Activated CD8-positive, alpha-beta T cell treated with anti-CD3 and anti-CD28 coated beads, Interleukin-2, amount 10 ng/mL, durations not matched to agents 7 days and 5 days (primary cell): ENCODE measurements at regions of chr7 and their contacts with region 1.

Region 1: GRCh38 chr7:129359638-129360037 is 74.6 kb upstream of the STRIP2 start:
- DNase-seq: no peak
- ATAC-seq: no peak
- H3K4me3 Mint-ChIP-seq: no peak overlapping the region
- H3K27ac Mint-ChIP-seq: no peak overlapping the region
- H3K4me1 Mint-ChIP-seq: peaks cover 6% of the 10 kb centered on the region
- H3K27me3 Mint-ChIP-seq: no peaks in the 10 kb centered on the region

Region 2: GRCh38 chr7:129343099-129343700 is 16.4 kb before region 1 on chr7:
- CTCF ChIA-PET with region 1: interaction called, 10 read pairs
- POLR2A ChIA-PET with region 1: no interaction called
- DNase-seq: peak; percentile 44
- ATAC-seq: peak; percentile 52
- H3K4me3 Mint-ChIP-seq: no peak overlapping the region
- H3K27ac Mint-ChIP-seq: no peak overlapping the region
- H3K4me1 Mint-ChIP-seq: peaks cover 41% of the 10 kb centered on the region
- H3K27me3 Mint-ChIP-seq: no peaks in the 10 kb centered on the region

Region 3: GRCh38 chr7:129417071-129417470 is 57.4 kb after region 1 on chr7:
- CTCF ChIA-PET with region 1: no interaction called
- POLR2A ChIA-PET with region 1: no interaction called
- DNase-seq: no peak
- ATAC-seq: no peak
- H3K4me3 Mint-ChIP-seq: no peak overlapping the region
- H3K27ac Mint-ChIP-seq: no peak overlapping the region
- H3K4me1 Mint-ChIP-seq: no peaks in the 10 kb centered on the region
- H3K27me3 Mint-ChIP-seq: no peaks in the 10 kb centered on the region

Region 4: DNA sequence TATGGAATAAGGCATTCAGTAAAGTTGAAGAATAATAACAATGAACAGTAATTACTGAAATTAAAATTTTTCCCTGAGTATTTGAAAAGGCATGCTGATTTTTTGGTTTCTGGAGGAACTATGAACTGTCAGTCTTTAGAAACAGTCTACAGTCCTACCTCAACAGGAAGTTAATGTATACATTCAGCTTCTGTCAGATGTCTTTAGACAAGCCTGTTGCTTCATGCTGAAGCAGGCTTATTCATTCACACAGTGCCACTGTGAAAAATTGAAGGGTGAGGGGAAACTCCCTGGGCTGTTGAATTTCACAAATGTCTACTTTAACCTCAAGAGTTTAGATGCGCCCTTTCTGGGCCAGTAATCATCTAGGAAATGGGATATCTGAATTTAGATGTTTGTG is 255.4 kb after region 1 on chr7:
- CTCF ChIA-PET with region 1: no interaction called
- POLR2A ChIA-PET with region 1: no interaction called
- DNase-seq: peak; percentile 42
- ATAC-seq: peak; percentile 14
- H3K4me3 Mint-ChIP-seq: peak overlapping the region; percentile 31
- H3K27ac Mint-ChIP-seq: peak overlapping the region; percentile 55
- H3K4me1 Mint-ChIP-seq: peaks cover 58% of the 10 kb centered on the region
- H3K27me3 Mint-ChIP-seq: no peaks in the 10 kb centered on the region